Right ventricle myocardium superior (tissue), 1 donor: ENCODE measurements at regions of chr11 and their contacts with region 1.

Region 1: GRCh38 chr11:19553683-19554333 is 158.8 kb upstream of the NAV2 start:
- DNase-seq: peak; percentile 85
- ATAC-seq: peak; percentile 87

Region 2: DNA sequence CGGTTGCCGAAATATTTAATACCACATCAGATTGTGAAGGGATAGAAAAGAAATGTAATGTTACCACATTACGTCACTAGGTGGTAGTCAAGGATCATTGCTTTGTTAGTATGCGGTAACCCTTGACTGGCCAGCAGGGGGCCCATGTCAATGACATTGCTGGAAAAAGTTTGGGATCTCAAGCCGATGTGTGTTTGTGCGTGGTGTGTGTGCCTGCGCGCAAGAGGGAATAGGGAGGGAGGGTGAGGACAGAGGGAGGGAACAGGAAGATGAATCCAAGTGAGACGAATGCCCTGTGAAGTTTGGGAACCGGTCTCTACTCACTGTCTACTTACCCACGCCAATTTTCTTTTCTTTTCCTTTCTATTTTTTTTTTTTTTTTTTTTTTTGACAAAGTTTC is 482.6 kb before region 1 on chr11:
- intact Hi-C with region 1: loop called (anchors 2 kb)
- DNase-seq: peak; percentile 79
- ATAC-seq: peak; percentile 95

Region 3: DNA sequence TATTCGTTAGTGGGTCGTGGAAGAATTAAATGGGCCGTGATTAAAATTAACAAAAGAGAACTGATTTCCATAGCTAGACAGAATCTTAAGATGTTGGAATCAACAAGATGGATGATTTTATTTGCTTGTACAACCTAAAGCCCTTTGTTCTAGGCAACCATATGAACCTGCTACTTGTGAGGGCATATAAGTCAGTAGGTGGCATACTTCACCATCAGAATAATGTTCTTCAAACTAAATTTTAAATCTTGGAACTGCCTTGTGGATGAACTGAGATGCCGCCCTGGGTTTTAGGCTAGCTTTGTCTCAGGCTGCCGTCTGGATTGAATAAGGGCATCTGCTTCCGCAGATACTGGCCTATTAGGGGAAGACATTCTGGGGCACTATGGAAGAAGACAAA is 393.0 kb before region 1 on chr11:
- intact Hi-C with region 1: loop called (anchors 5 kb)
- DNase-seq: no peak
- ATAC-seq: no peak

Region 4: DNA sequence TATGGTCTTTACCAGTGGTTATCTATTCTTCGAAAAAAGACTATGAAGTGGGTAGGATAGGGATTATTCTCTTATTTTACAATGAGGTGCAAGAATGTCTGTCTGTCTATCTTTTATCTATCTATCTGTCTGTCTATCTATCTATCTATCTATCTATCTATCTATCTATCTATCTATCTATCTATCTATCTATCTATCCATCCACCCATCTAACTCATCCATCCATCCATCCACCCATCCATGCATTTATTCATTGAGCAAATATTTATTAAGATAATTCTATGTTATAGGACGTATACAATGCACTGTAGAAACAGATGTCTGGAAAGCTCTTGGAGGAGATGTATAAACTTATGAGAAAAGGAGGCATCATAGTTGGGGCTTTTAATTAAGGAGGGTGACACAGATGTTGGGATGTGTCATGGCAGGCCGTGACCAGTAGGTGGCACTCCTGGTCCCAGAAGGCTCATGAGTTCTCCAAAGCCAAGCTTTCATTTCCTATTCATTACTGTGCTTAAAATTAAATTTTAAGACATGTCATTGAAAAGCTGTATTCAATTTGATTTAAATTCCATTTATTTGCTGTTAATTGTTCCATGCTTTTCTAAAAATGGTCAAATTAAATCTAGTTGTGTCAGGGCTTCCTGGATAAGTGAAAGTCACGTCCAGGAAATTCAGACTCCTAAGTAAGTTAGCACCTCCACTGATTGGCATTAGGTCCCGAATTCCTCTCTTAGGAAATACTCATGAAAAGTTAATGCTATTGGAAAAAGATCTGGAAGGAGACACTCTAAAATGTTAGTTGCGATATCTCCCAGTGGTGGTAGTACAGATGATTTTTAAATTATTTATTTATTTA is 294.1 kb before region 1 on chr11:
- intact Hi-C with region 1: loop called (anchors 5 kb)
- DNase-seq: peak; percentile 80
- ATAC-seq: peak; percentile 92

Region 5: GRCh38 chr11:19311308-19312030 is 242.3 kb before region 1 on chr11:
- intact Hi-C with region 1: loop called (anchors 5 kb)
- DNase-seq: peak; percentile 66
- ATAC-seq: peak; percentile 92